Right ventricle myocardium inferior (tissue), 1 donor: ENCODE measurements at regions of chr2 and their contacts with region 1.

Region 1: GRCh38 chr2:10043906-10044601 is 704 bp downstream of the KLF11 start:
- DNase-seq: peak; percentile 99
- ATAC-seq: peak; percentile 77

Region 2: DNA sequence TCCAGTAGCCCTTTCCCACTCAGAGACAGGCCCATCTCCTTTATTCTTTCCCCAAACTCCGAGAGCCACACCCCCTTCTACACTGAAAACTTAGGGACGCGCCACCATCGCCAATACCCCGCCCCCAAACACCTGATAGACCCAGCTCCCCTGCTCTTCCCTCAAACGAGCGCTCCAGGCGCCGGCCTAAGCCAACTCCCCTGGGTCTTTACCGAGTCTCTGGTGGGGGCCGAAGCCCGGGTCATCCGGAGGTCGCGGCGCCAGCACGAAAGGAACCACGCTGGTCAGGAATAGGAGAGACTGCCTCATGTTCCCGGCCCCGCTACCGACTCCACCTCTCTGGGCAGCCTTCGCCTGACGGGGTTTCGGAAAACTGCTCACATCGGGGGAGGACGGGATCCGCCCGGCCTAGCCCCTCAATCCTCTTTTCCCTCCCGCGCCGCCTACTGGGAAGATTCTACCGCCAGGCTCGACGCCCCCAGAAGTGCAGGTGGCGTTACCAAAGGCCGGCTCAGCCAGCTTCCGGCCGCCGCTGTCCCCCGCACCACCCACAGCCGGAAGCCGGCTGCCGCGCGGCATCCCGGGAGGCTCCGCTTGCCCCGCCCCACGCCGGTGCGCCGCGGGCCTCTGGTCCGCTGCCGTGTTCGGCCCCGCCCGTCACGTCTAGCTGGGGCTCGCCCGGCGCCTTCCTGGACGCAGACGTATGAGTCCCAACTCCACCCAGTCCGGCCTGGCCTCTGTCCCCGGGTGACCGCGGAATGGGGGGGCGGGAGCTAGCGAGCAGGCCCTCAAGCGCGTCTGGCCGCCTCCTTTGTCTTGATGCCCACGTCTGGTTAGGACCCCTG is 488.5 kb before region 1 on chr2 and contains the start of gene ADAM17:
- intact Hi-C with region 1: loop called (anchors 10 kb)
- DNase-seq: peak; percentile 100
- ATAC-seq: peak; percentile 98
- total RNA-seq, gene ADAM17: 13.5 TPM

Region 3: DNA sequence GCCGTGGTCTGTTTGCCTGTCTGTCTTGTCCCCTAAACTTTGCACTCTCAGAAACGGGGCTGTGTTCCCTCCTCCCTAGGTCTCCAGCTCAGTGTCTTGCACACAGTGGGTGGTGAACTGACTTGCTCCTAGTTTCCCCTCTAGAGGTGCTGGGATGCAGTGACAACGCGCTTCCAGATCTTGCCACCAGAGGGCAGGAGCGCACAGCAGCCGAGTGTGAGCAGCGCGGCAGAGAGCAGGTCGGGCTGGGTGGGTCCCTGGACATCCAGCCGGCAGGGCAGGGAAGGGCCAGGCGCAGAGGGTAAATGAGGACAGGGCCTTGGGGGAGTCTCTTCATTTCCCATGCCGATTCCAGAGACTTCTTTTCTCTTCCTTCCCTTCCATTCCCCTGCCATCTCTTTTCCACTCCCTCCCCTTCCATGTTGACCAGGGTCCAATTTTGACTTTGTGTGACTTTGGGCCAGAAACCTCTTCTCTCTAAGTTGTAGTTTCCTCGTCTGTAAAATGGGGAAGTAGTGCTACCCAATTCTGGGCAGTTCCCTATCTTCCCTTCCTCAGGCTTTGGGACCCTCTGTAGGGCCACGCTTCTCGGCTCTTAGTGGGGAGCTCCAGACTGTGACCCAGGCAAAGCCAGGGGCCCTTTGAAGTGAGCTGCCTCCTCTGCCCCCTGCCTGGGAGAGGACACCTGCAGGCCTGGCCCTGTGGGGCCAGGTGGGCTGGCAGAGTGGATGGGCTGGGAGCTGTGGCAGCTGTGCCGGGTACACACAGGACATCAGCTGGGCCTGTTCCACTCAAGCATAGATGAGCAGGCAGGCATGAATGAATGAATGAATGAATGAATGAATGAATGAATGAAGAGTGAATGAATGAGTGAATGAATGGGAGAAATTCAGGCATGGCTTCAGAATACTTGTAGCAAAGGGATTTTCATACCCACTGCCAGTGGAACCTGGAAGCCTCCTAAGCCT is 244.1 kb before region 1 on chr2:
- intact Hi-C with region 1: loop called (anchors 5 kb)
- DNase-seq: peak; percentile 91
- ATAC-seq: peak; percentile 83

Region 4: DNA sequence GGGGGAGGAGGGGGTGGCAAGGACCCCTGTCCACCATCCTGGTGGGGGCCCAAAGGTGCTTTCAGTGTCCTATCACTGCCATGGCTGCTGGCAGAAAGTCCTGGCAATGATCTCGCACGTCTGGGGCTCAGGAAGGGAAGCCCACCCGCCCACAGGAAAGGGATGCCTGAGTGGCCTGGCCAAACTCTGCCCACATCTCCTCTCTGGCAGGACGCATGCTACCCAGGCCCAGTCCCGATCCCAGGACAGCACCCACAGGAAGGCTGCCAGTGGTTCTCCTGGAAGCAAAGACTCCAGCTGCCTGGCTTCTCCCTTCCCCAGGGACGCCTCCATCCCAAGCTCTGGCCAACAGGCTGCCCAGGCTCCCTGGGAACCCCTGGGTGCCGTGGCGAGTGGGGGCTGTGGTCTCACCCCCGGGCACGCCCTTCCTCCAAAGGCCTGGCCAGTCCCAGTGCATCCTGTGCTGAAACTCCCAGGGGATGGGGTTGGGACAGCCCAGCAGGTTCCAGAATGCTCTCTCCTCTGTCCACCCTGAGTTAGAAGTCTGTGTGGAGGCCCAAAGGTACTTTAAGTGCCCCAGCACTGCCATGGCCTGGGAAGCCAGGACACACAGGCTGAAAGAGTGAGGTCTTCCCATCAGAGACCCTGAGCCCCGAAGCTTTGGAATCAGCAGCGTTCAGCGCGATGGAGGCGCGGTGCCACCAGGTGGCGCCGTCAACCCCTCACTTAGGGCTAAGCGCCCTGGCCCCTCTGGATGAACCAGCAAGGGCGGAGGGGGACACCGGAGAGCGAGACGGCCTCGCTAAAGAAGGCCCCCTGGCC is 230.5 kb before region 1 on chr2:
- intact Hi-C with region 1: loop called (anchors 5 kb)
- DNase-seq: no peak
- ATAC-seq: peak; percentile 79

Region 5: GRCh38 chr2:9984217-9984739 is 59.8 kb before region 1 on chr2:
- intact Hi-C with region 1: loop called (anchors 1 kb)
- DNase-seq: no peak
- ATAC-seq: peak; percentile 62

Region 6: GRCh38 chr2:10009811-10010292 is 34.2 kb before region 1 on chr2:
- intact Hi-C with region 1: loop called (anchors 2 kb)
- DNase-seq: peak; percentile 93
- ATAC-seq: peak; percentile 87

Region 7: DNA sequence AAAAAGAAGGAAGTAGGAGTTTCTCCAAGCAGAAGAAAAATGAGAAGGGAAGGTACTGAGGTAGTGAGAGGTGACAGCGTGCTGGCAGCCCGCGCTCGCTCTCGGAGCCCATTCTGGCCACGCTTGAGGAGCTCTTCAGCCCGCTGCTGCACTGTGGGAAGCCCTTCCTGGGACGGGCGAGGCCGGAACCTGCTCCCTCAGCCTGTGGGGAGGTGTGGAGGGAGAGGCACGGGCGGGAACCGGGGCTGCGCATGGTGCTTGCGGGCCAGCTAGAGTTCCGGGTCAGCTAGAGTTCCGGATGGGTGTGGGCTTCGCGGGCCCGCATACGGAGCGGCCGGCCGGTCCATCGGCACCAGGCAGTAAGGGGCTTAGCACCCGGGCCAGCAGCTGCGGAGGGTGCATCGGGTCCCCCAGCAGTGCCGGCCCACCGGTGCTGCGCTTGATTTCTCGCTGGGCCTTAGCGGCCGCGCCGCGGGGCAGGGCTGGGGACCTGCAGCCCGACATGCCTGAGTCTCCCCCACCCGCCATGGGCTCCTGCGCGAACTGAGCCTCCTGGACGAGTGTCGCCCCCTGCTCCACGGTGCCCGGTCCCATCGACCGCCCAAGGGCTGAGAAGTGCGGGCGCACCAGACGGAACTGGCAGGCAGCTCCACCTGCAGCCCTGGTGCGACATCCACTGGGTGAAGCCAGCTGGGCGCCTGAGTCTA is 47.3 kb after region 1 on chr2:
- intact Hi-C with region 1: no loop called
- DNase-seq: peak; percentile 76
- ATAC-seq: no peak